Heart right ventricle (tissue), 16 donors: ENCODE measurements at regions of chr7 and their contacts with region 1.

Region 1: DNA sequence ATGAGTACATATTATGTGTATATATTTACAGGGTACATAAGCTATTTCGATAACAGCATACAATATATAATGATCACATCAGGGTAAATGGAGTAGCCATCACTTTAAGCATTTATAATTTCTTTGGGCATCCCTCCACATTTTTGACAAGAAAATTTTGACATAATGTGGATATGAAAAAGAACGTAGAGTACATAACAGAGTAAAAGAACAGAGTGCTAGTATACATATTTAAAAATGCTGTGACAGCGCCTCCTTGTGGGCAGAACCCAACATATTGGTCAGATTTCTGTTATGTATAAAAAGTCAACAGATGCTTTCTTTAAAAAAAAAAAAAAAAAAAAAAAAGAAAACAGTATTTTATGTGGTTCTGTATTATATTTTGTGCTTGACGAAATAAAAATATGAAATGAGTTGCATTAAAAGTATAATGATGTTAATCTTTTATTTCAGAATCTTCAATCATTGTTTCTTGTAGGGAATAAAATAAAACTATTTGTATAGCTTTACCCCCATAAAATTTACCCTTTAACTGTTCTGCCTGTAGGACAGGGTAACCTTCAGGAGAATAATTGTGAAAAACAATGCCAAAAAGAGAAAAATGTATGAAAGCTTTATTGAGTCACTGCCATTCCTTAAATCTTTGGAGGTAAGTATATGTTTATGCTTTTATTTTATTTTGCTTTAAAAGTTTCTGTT is 18.3 kb upstream of the HBP1 start:
- DNase-seq: peak; percentile 38 to 79
- ATAC-seq: peak in 7 of 8 donors; percentile 57 to 75 (median 69)
- H3K4me3 ChIP-seq: no peak overlapping the region
- H3K27ac ChIP-seq: no peak overlapping the region
- H3K4me1 ChIP-seq: peaks cover 0 to 9% (median 0%) of the 10 kb centered on the region in 9 donors
- H3K27me3 ChIP-seq: no peaks in the 10 kb centered on the region
- CTCF ChIP-seq: peak; percentile 45 to 82 (median 73)

Region 2: DNA sequence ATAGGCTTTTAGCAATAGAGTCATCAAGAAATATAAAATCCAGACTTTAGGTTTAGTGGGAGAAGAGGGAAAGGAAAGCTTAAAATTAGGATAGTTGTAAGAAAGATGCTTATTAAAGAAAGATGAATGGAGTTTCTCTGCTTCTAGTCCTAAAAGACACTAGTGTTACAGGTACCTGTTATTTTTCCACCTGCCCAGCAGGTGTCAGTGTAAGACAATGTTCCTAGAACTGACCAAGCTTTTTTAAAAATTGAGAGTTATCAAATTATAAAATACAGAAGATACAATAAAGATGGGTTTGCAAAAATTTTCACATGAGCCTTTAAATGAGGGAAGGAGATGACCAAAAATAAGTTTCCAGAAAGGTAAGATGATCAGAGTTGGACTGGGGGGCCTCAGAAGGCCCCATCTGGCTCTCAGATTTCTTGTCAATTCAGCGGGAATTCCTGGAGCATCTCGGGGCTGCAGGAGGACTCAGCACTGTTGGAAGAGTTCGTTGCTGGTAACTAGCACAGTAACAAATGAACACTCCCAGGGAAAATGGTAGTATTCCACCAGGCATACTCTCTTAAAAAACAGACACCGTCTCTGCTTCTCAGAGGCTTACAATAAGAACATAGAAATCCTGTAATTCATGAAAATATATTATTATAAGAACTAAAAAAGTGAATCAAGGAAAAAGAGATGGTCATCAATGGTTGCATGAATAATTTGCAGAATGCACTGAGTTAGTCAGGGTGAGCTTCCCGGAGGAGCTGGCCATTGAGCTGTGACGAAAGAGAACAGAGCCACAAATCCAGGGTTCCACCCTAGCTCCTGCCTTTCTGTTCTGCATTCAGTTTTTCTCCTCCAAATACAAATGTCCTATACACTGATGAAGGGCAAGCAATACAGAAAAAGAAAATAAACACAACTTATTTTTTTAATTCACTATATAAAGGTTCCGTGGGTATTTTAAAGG is 357.2 kb before region 1 on chr7:
- intact Hi-C with region 1: loop called in 9 of 10 experiments (anchors 1 to 10 kb)
- DNase-seq: no peak
- ATAC-seq: no peak
- H3K4me3 ChIP-seq: no peak overlapping the region
- H3K27ac ChIP-seq: no peak overlapping the region
- H3K4me1 ChIP-seq: no peaks in the 10 kb centered on the region
- H3K27me3 ChIP-seq: peaks cover 0 to 2% (median 0%) of the 10 kb centered on the region in 7 donors
- CTCF ChIP-seq: peak in 8 of 9 donors; percentile 46 to 74 (median 64)

Region 3: GRCh38 chr7:106947244-106947728 is 203.2 kb before region 1 on chr7:
- intact Hi-C with region 1: loop called (anchors 1 to 5 kb)
- DNase-seq: peak in 1 of 2 donors; percentile 56
- ATAC-seq: peak; percentile 59 to 93 (median 84)
- H3K4me3 ChIP-seq: no peak overlapping the region
- H3K27ac ChIP-seq: no peak overlapping the region
- H3K4me1 ChIP-seq: peaks cover 0 to 1% (median 0%) of the 10 kb centered on the region in 9 donors
- H3K27me3 ChIP-seq: no peaks in the 10 kb centered on the region
- CTCF ChIP-seq: peak; percentile 47 to 85 (median 74)

Region 4: GRCh38 chr7:107029764-107030286 is 120.7 kb before region 1 on chr7:
- intact Hi-C with region 1: loop called in 1 of 10 experiments (anchors 5 kb)
- DNase-seq: no peak
- ATAC-seq: peak in 1 of 8 donors; percentile 64
- H3K4me3 ChIP-seq: no peak overlapping the region
- H3K27ac ChIP-seq: no peak overlapping the region
- H3K4me1 ChIP-seq: peaks cover 0 to 43% (median 6%) of the 10 kb centered on the region in 9 donors
- H3K27me3 ChIP-seq: no peaks in the 10 kb centered on the region
- CTCF ChIP-seq: no peak